Breast epithelium (tissue), 4 donors: ENCODE measurements at regions of chr3 and their contacts with region 1.

Region 1: GRCh38 chr3:134308350-134308891 is 57.8 kb upstream of the RYK start:
- DNase-seq: peak; percentile 84 to 87
- H3K4me3 ChIP-seq: peak overlapping the region in 1 of 3 donors; percentile 27
- H3K27ac ChIP-seq: peak overlapping the region; percentile 64 to 94
- H3K4me1 ChIP-seq: peaks cover 0 to 11% of the 10 kb centered on the region in 2 donors
- H3K27me3 ChIP-seq: no peaks in the 10 kb centered on the region
- CTCF ChIP-seq: peak; percentile 100
- POLR2A ChIP-seq: no peak

Region 2: GRCh38 chr3:133655731-133656515 is 652.5 kb before region 1 on chr3:
- intact Hi-C with region 1: loop called (anchors 5 kb)
- DNase-seq: no peak
- H3K4me3 ChIP-seq: no peak overlapping the region
- H3K27ac ChIP-seq: no peak overlapping the region
- H3K4me1 ChIP-seq: no peaks in the 10 kb centered on the region
- H3K27me3 ChIP-seq: no peaks in the 10 kb centered on the region
- CTCF ChIP-seq: no peak
- POLR2A ChIP-seq: no peak

Region 3: GRCh38 chr3:134212906-134213665 is 95.3 kb before region 1 on chr3:
- intact Hi-C with region 1: loop called (anchors 5 kb)
- DNase-seq: peak; percentile 76 to 89
- H3K4me3 ChIP-seq: no peak overlapping the region
- H3K27ac ChIP-seq: peak overlapping the region in 1 of 2 donors; percentile 42
- H3K4me1 ChIP-seq: no peaks in the 10 kb centered on the region
- H3K27me3 ChIP-seq: no peaks in the 10 kb centered on the region
- CTCF ChIP-seq: peak; percentile 91 to 95 (median 94)
- POLR2A ChIP-seq: no peak

Region 4: DNA sequence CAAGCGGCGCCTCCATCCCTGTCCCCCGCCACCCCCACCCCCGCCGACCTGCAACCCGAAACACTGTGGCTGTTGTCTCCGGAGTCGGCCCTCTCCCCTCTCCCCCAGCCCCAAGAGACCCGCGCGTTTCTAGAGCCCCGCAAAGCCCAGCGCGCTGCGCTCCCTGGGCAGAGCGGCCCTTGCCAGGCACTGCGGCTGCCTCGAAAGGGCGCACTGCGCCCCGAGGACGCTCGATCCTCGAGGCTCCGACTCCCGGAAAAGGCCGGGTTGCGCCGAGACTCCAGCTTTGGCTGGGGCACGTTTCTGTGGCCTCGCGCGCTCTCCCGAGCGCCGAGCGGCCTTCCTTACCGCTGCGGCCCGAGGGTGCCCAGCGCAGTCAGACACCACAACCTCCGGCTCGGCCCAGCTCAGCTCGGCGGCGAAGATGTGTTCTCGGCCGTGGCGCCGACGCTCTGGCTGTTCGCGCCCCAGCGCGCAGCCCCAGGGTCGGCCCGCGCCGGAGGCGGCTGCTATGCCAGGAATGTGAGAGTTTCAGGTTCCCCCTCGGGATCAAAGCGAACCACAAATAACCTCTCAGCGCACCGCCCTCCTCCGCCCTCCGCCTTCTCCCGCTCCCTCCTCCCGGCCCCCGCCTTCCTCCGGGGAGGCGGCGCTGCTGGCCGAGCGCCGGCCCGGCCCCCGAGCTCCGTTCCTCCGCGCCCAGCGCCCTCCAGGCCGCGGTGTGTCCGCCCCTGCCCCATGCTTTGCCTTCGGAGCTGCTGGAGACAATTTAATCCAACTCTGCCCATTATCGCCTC is 65.8 kb after region 1 on chr3 and contains the start of gene AMOTL2:
- intact Hi-C with region 1: loop called (anchors 2 kb)
- DNase-seq: peak; percentile 85 to 92
- H3K4me3 ChIP-seq: peak within 1 kb of the TSS; percentile 76 to 89 (median 80)
- H3K27ac ChIP-seq: peak within 1 kb of the TSS; percentile 97 to 100
- H3K4me1 ChIP-seq: peaks cover 15 to 16% of the 10 kb centered on the region in 2 donors
- H3K27me3 ChIP-seq: no peaks in the 10 kb centered on the region
- CTCF ChIP-seq: no peak
- POLR2A ChIP-seq: peak; percentile 88
- total RNA-seq, gene AMOTL2: 78.3 to 281 (median 83.2) TPM

Region 5: GRCh38 chr3:134473868-134474546 is 165.6 kb after region 1 on chr3:
- intact Hi-C with region 1: loop called (anchors 5 kb)
- DNase-seq: peak; percentile 76 to 82
- H3K4me3 ChIP-seq: no peak overlapping the region
- H3K27ac ChIP-seq: peak overlapping the region in 1 of 2 donors; percentile 35
- H3K4me1 ChIP-seq: no peaks in the 10 kb centered on the region
- H3K27me3 ChIP-seq: no peaks in the 10 kb centered on the region
- CTCF ChIP-seq: peak; percentile 90 to 93 (median 91)
- POLR2A ChIP-seq: no peak

Region 6: DNA sequence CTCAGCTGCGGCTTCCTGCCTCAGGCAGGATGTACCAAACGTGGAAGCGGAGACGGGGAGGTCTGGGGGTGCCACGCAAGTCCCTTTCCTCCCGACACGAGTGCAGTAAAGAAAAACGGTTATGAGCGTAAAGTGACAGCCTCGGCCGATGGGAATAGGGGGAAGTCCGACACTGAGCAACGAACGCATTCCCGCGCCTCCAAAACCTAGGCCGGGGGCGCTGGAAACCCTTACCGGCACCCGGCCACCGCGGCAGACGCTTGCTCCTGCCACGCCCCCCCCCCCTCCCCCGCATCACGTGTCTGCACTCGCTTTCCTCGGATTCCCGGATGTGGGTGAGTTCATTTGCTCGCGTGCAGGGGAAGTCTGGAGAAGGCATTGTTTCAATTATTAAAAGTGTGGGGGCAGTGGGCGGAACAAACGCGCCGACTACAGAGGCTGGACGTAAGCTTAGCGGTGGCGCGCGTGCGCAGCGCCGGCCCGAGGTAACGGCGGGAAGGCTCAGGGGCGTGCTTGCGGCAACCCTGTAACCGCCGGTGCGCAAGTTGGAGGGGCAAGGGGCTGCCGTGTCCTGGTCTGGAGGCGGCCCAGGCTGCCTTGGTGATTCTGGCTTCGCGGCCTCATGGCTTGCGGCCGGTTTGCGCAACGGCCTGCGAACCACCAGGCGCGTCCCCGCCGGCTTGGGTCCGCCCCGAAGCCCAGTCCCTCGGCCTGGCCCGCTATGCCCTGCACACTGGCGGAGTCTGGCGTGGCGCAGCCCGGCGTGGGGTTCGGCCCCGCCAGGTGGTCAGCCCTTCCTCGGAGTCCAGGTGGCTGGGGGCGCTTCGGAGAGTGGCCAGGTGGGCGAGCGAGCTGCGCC is 177.5 kb after region 1 on chr3 and contains the starts of genes ANAPC13 and CEP63:
- intact Hi-C with region 1: loop called (anchors 5 kb)
- DNase-seq: peak; percentile 86 to 94
- H3K4me3 ChIP-seq: peak within 1 kb of the TSS; percentile 64 to 94 (median 84)
- H3K27ac ChIP-seq: peak within 1 kb of the TSS; percentile 96 to 99
- H3K4me1 ChIP-seq: peaks cover 0 to 3% of the 10 kb centered on the region in 2 donors
- H3K27me3 ChIP-seq: no peaks in the 10 kb centered on the region
- CTCF ChIP-seq: peak in 1 of 3 donors; percentile 8
- POLR2A ChIP-seq: peak; percentile 29
- total RNA-seq, gene ANAPC13: 56.0 to 68.3 (median 66.1) TPM
- total RNA-seq, gene CEP63: 31.8 to 38.9 (median 33.1) TPM